Adrenal gland (tissue), 19 donors: ENCODE measurements at regions of chr17 and their contacts with region 1.

Region 1: GRCh38 chr17:55926276-55926990 is 175.6 kb downstream of the PCTP start:
- DNase-seq: no peak
- H3K4me3 ChIP-seq: no peak overlapping the region
- H3K27ac ChIP-seq: no peak overlapping the region
- H3K4me1 ChIP-seq: no peaks in the 10 kb centered on the region
- H3K27me3 ChIP-seq: no peaks in the 10 kb centered on the region
- CTCF ChIP-seq: no peak
- POLR2A ChIP-seq: no peak

Region 2: DNA sequence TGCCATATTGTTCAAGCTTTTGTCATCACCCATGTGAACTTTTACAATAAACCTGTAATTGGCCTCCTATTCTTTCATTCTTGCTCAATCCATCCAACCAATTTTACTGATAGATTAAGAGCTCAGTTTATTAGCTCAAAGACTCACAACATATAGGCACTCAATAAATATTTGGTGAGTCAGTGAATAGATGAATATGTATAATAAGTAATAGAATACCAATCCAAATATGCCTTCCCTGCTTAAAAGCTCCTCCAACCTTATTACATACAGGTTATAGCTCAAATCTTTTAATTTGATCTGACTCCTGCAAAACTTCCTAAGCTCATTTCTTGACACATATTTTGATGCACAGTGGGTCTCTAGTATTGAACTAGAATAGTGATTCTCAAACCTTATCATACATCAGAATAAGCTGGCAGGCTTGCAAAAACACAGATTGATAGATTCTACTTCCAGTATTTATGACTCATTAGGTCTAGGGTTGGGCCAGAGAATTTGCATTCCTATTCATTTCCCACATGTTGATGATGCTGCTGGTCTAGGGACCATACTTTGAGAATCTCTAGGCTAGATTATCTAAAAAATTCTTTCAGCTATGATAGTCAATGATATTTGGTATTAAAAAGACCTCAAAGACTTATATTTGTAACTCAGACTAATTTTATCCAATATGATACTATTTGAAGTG is 61.2 kb before region 1 on chr17:
- intact Hi-C with region 1: loop called in 1 of 2 experiments (anchors 10 kb)
- DNase-seq: no peak
- H3K4me3 ChIP-seq: no peak overlapping the region
- H3K27ac ChIP-seq: no peak overlapping the region
- H3K4me1 ChIP-seq: no peaks in the 10 kb centered on the region
- H3K27me3 ChIP-seq: no peaks in the 10 kb centered on the region
- CTCF ChIP-seq: no peak
- POLR2A ChIP-seq: no peak

Region 3: GRCh38 chr17:56009795-56010651 is 83.6 kb after region 1 on chr17:
- intact Hi-C with region 1: no loop called
- DNase-seq: no peak
- H3K4me3 ChIP-seq: no peak overlapping the region
- H3K27ac ChIP-seq: no peak overlapping the region
- H3K4me1 ChIP-seq: no peaks in the 10 kb centered on the region
- H3K27me3 ChIP-seq: no peaks in the 10 kb centered on the region
- CTCF ChIP-seq: no peak
- POLR2A ChIP-seq: no peak